ENCODE measurements at regions of chr19 and their contacts with region 1.

Region 1: GRCh38 chr19:54023191-54023590 is 31.8 kb downstream of the CACNG6 start:
- DNase-seq: no peak
- ATAC-seq: no peak
- H3K4me3 ChIP-seq: no peak overlapping the region
- H3K27ac ChIP-seq: no peak overlapping the region
- H3K4me1 ChIP-seq: peaks cover 6 to 12% of the 10 kb centered on the region in 2 experiments; a peak in 3 of 5 replicates
- H3K27me3 ChIP-seq: peaks cover 0 to 6% of the 10 kb centered on the region in 2 experiments; a peak in 1 of 5 replicates
- CTCF ChIP-seq: no peak
- EP300 ChIP-seq: no peak
- POLR2A ChIP-seq: no peak
- RAD21 ChIP-seq: no peak

Region 2: DNA sequence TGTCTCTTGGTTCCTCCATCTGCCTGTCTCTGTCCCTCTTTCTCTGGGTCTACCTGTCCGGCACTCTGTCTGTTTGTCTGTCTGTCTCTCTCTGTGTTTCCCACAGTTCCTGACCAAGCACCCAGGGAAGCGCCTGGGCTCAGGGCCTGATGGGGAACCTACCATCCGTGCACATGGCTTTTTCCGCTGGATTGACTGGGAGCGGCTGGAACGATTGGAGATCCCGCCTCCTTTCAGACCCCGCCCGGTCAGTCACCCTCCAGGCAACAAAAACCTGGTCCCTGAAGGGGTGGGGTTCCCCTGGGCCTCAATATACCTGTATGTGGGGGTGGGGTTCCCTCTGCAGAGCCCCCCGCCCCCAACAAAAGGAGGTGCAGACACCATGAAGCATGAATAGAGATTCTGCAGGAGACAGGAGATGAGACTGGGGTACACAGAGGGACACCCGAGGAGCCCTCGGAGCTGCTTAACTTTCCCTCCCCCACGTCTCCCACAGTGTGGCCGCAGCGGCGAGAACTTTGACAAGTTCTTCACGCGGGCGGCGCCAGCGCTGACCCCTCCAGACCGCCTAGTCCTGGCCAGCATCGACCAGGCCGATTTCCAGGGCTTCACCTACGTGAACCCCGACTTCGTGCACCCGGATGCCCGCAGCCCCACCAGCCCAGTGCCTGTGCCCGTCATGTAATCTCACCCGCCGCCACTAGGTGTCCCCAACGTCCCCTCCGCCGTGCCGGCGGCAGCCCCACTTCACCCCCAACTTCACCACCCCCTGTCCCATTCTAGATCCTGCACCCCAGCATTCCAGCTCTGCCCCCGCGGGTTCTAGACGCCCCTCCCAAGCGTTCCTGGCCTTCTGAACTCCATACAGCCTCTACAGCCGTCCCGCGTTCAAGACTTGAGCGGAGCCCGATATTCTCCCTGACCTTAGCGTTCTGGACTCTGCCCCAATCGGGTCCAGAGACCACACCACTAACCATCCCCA is 116.7 kb before region 1 on chr19:
- CTCF ChIA-PET with region 1: interaction called, 4 read pairs
- POLR2A ChIA-PET with region 1: no interaction called
- in situ Hi-C with region 1: no loop called
- intact Hi-C with region 1: loop called (anchors 5 kb)
- DNase-seq: peak; percentile 40 to 81 (median 76)
- ATAC-seq: peak; percentile 74
- H3K4me3 ChIP-seq: no peak overlapping the region
- H3K27ac ChIP-seq: no peak overlapping the region
- H3K4me1 ChIP-seq: peaks cover 0 to 23% of the 10 kb centered on the region in 2 experiments; a peak in 2 of 5 replicates
- H3K27me3 ChIP-seq: peaks cover 11 to 43% of the 10 kb centered on the region in 2 experiments; a peak in 3 of 5 replicates
- CTCF ChIP-seq: peak; percentile 74 to 78 (median 77)
- EP300 ChIP-seq: no peak
- POLR2A ChIP-seq: no peak
- RAD21 ChIP-seq: peak; percentile 19 to 55; a peak in 3 of 4 replicates

Measured in K562 (cell line).